Mammary epithelial cell (primary cell): ENCODE measurements at regions of chr3 and their contacts with region 1.

Region 1: DNA sequence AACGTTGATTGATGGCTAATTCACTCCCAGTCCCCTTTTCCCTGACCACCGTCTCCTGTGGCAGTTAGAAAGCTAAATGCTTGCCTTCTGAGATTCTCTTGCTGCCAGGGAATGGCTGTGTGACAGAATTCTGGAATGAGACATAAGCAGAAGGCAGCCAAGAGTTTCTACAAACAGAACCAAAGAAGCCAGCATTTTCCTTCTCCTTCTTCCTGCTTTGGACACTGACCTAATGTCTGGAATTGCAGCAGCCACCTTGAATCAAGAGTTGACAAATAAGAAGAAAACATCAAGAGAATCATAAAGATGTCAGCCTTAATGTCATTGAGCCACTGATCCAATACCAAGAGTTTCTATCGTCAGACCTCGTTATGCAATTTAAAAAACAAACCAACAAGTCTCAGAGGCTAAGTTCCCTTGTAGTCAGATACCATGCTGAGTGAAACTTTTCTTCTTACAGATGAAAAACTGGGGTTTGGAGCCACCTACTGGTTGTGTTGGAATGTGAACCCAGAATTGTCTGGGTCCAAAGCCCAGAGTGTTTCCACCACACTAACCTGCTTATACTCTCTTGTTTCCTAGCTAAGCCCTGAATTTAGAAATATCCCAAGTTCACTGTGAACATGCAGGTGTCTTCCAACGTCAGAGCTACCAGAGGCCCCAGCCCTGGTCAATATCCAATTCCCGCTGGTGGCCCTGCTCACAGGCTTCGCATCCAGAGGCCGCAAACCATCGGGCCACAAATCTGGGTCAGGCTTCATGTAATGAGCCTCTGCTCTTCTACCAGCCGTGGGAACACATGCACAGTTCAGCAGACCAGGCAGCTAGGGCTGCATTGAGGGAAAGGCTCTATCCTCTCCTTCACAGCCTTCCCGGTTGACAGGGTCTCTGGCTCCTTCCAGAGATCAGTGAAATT is 42.5 kb downstream of the MCF2L2 start:
- DNase-seq: peak; percentile 59
- H3K4me3 ChIP-seq: no peak overlapping the region
- H3K27ac ChIP-seq: no peak overlapping the region
- H3K4me1 ChIP-seq: peaks cover 8% of the 10 kb centered on the region
- H3K27me3 ChIP-seq: no peaks in the 10 kb centered on the region
- CTCF ChIP-seq: peak; percentile 72 to 80

Region 2: DNA sequence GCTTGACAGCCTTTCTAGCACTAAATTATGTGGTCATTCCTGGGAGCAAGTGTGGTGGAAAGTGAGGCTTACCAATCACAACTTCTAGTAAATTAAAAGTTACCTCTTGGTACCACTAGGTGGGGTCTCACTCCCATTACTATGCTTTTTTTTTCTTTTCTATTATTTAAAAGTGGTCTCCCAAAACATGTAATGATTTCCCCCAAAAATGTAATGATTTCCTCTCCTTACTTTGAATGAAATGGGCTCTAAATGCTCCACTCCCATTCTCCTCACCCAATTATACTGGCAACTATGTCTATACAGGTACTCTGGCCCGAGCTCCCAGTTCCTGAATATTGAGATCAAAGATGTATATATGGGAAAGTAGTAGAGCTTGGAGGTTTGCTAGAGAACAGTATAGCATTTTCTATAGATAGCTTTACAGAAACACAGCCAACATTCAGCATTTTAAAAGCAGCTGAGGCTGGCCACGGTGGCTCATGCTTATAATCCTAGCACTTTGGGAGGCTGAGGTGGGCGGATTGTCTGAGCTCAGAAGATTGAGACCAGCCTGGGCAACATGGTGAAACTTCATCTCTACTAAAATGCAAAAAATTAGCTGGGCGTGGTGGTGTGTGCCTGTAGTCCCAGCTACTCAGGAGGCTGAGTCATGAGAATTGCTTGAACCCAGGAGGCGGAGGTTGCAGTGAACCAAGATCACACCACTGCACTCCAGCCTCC is 476.5 kb before region 1 on chr3:
- CTCF ChIA-PET with region 1: no interaction called
- dilution Hi-C with region 1: no loop called
- in situ Hi-C with region 1: no loop called
- intact Hi-C with region 1: loop called (anchors 2 kb)
- DNase-seq: peak; percentile 15
- H3K4me3 ChIP-seq: no peak overlapping the region
- H3K27ac ChIP-seq: peak overlapping the region; percentile 37
- H3K4me1 ChIP-seq: peaks cover 5% of the 10 kb centered on the region
- H3K27me3 ChIP-seq: no peaks in the 10 kb centered on the region
- CTCF ChIP-seq: peak; percentile 38 to 48

Region 3: DNA sequence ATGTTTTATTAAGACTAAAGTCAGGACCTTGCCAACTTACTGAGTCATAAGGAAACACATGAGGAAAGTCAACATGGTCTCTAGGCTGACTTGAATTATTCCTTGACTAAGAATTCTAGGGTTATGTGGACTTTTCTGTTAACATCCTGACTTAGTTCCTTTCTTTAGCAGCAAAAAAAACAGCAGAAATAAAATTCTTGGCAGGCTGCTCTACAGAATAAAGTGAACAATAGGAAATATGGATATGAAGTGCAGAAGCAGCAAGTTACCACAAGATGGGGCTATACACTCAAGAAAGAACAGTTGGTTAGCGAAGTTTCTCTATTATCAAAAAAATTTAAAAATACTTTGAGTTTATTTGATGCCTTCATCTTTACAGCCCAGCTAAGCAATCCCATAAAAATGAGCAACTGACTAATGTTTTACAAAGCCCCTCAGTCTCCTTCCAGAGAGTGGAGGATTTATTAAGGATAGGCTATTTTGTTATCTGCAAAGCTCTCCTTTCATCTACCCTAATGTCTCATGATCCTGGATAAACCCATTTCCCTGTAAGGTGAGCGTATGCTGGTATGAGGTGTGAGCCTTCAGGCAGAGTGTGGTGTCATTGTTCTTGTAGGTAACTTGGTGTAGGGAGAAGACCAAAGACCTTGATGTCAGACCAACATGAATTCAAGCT is 263.6 kb before region 1 on chr3:
- CTCF ChIA-PET with region 1: no interaction called
- dilution Hi-C with region 1: no loop called
- in situ Hi-C with region 1: loop called (anchors 5 kb)
- intact Hi-C with region 1: loop called (anchors 1 kb)
- DNase-seq: peak; percentile 28
- H3K4me3 ChIP-seq: no peak overlapping the region
- H3K27ac ChIP-seq: no peak overlapping the region
- H3K4me1 ChIP-seq: peaks cover 5% of the 10 kb centered on the region
- H3K27me3 ChIP-seq: no peaks in the 10 kb centered on the region
- CTCF ChIP-seq: peak; percentile 75 to 84